Posterior vena cava (tissue), 2 donors: ENCODE measurements at regions of chr3 and their contacts with region 1.

Region 1: DNA sequence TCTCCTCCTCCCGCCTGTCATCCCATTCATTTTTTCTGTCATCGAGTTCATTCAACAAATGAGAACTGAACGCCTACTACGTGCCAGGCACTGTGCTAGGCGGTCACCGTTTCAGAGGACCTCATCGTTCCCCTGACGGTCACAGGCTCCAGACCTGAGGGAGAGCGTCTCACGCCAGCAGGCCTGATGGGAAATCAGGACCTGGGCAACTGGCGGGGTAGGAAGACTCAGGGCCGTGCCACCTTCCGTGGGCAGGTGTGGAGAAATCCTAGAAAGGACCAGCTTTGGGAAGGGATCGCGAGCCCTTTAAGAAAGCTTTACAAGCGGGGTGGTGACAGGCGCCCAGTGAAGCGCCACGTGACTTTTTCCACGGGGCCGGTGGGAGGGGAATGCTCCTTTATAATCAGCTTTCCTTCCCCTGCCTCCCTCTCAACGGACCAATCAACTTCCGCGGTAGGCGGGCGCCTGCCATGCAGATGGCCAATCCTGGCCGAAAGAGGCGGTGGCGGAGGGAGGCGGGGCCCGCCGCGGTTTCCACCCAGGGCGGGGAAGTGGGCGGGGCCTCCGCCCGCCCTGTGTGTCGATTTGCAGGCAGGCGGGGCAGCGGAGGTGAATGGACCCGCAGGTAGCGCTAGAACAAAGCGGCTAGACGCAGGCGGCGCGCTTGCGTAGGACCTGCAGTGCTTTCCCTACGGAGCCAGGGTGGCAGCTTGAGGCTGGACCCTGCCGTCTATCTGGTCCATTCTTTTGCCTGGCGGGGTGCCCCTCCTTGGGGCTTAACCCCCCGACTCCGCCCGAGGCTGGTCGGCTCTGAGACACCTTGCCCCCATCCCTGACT is 816 bp upstream of the DUSP7 start:
- DNase-seq: peak; percentile 100

Region 2: DNA sequence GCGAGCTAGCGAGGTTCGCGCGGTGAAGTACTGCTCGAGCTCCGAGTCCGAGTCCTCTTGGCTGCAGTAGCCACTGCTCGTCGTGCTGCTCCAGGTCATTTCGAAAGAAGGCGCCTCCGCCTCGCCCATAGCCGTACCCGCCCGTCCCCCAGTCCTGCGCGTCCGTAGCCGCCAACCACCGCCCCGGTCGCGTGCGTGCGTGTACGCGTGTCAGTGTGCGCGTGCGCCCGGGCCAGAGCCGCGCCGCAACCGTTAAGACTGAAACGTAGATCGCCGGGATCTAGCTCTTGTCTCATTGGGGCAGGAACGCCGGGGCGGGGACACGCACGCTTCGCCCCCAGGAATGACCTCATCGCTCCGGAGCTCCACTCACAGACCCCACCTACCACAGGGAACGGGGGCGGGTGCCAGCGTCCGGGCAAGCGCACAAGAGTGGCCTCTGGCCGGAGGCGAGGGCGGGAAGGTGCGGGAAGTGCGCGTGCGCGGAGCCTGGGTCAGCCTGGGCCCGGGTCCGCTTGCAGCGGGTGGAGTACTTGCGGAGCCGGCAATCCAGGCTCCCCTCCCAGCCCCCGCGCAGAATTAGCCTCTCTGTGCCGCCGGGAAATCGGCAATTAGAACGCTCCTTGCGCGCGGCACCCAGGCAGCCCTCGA is 1719.9 kb before region 1 on chr3:
- intact Hi-C with region 1: loop called in 1 of 2 experiments (anchors 10 kb)
- DNase-seq: peak; percentile 100

Region 3: DNA sequence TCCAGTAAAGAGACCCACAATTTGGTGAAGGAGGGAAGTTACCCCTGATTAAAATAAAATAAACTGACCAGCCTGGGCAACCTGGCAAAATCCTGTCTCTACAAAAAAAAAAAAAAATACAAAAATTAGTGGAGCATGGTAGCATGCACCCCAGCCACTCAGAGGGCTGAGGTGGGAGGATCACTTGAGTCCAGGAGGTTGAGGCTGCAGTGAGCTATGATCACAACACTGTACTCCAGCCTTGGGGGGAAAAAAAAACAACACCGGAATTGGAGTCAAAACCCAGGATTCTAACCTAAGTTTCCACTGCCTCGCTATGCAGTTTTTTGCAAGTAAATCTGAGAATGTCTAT is 579.9 kb before region 1 on chr3:
- intact Hi-C with region 1: no loop called
- DNase-seq: no peak

Region 4: GRCh38 chr3:52108302-52109232 is 51.4 kb after region 1 on chr3:
- intact Hi-C with region 1: loop called (anchors 5 kb)
- DNase-seq: peak; percentile 87

Region 5: GRCh38 chr3:52685709-52686691 is 628.8 kb after region 1 on chr3 and contains the starts of genes GNL3 and PBRM1:
- intact Hi-C with region 1: no loop called
- DNase-seq: peak; percentile 98
- total RNA-seq, gene GNL3: 46.1 to 50.5 TPM
- total RNA-seq, gene PBRM1: 63.8 to 78.1 TPM